ENCODE measurements at regions of chr18 and their contacts with region 1.

Region 1: DNA sequence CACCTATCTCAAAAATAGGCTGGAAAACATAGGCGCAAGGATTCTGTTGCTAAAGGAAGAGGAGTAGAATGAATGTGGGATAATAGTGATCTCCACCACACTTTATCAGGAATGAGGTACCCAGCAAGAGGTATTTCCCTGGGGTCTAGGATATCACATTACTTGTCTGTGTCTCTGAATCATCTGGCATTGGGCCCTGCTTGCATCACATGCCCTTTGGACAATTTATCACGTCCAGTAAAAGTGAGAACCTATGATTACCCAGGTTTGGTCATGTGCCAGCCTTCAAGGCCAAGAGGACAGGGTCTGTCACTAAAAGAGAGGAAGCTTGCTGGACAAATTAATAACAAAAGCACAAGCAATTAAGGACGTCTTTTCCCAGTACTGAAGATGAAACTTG is 11.4 kb upstream of the TRAPPC8 start:
- DNase-seq: no peak
- ATAC-seq: no peak
- H3K4me3 ChIP-seq: no peak overlapping the region
- H3K4me3 Mint-ChIP-seq: no peak overlapping the region
- H3K27ac ChIP-seq: no peak overlapping the region
- H3K27ac Mint-ChIP-seq: no peak overlapping the region
- H3K4me1 ChIP-seq: no peaks in the 10 kb centered on the region
- H3K4me1 Mint-ChIP-seq: peaks cover 2% of the 10 kb centered on the region
- H3K27me3 ChIP-seq: no peaks in the 10 kb centered on the region
- H3K27me3 Mint-ChIP-seq: peaks cover 8% of the 10 kb centered on the region
- CTCF ChIP-seq: no peak

Region 2: GRCh38 chr18:31555971-31556747 is 398.2 kb before region 1 on chr18:
- CTCF ChIA-PET with region 1: interaction called, 4 read pairs
- POLR2A ChIA-PET with region 1: no interaction called
- intact Hi-C with region 1: loop called (anchors 1 kb)
- DNase-seq: peak; percentile 66
- ATAC-seq: peak; percentile 39
- H3K4me3 ChIP-seq: no peak overlapping the region
- H3K4me3 Mint-ChIP-seq: no peak overlapping the region
- H3K27ac ChIP-seq: no peak overlapping the region
- H3K27ac Mint-ChIP-seq: no peak overlapping the region
- H3K4me1 ChIP-seq: no peaks in the 10 kb centered on the region
- H3K4me1 Mint-ChIP-seq: no peaks in the 10 kb centered on the region
- H3K27me3 ChIP-seq: peaks cover 0 to 2% (median 0%) of the 10 kb centered on the region in 4 experiments
- H3K27me3 Mint-ChIP-seq: peaks cover 8% of the 10 kb centered on the region
- CTCF ChIP-seq: peak; percentile 98

Region 3: DNA sequence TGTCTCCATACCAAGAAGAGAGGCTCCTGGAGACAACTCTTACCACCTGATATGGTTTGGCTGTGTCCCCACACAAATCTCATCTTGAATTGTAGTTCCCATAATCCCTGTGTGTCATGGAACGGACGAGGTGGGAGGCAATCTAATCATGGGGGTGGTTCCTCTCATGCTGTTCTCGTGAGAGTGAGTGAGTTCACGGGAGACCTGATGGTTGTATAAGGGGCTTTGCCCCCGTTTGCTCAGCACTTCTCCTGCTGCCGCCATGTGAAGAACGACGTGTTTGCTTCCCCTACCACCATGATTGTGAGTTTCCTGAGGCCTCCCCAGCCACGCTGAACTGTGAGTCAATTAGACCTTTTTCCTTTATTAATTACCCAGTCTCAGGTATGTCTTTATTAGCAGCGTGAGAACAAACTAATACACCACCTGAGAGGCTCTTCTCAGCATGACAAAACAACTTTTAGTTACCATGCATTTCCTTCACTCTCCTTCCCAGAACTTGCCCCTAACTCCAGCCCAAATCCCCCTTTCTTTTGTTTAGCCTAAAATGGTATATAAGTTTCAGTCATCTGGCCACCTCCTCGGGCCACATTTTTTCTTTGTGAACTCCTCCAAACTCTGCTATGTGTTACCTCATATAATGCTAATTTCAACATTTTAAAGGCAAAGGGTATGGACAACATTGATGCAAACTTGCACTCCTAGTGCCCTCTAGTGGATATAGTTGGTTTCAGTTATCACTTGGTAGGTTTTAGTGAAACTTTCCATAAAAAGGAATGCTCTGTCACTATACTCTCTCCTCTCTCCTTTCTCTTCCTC is 135.0 kb before region 1 on chr18:
- CTCF ChIA-PET with region 1: interaction called, 5 read pairs
- POLR2A ChIA-PET with region 1: no interaction called
- intact Hi-C with region 1: loop called (anchors 5 kb)
- DNase-seq: peak; percentile 42
- ATAC-seq: no peak
- H3K4me3 ChIP-seq: no peak overlapping the region
- H3K4me3 Mint-ChIP-seq: no peak overlapping the region
- H3K27ac ChIP-seq: no peak overlapping the region
- H3K27ac Mint-ChIP-seq: no peak overlapping the region
- H3K4me1 ChIP-seq: no peaks in the 10 kb centered on the region
- H3K4me1 Mint-ChIP-seq: no peaks in the 10 kb centered on the region
- H3K27me3 ChIP-seq: no peaks in the 10 kb centered on the region
- H3K27me3 Mint-ChIP-seq: peaks cover 6% of the 10 kb centered on the region
- CTCF ChIP-seq: peak; percentile 83

Region 4: GRCh38 chr18:31876707-31877106 is 77.6 kb before region 1 on chr18:
- CTCF ChIA-PET with region 1: no interaction called
- POLR2A ChIA-PET with region 1: no interaction called
- intact Hi-C with region 1: loop called (anchors 5 kb)
- DNase-seq: no peak
- ATAC-seq: no peak
- H3K4me3 ChIP-seq: no peak overlapping the region
- H3K4me3 Mint-ChIP-seq: no peak overlapping the region
- H3K27ac ChIP-seq: no peak overlapping the region
- H3K27ac Mint-ChIP-seq: no peak overlapping the region
- H3K4me1 ChIP-seq: no peaks in the 10 kb centered on the region
- H3K4me1 Mint-ChIP-seq: peaks cover 11% of the 10 kb centered on the region
- H3K27me3 ChIP-seq: no peaks in the 10 kb centered on the region
- H3K27me3 Mint-ChIP-seq: no peaks in the 10 kb centered on the region
- CTCF ChIP-seq: no peak

Region 5: DNA sequence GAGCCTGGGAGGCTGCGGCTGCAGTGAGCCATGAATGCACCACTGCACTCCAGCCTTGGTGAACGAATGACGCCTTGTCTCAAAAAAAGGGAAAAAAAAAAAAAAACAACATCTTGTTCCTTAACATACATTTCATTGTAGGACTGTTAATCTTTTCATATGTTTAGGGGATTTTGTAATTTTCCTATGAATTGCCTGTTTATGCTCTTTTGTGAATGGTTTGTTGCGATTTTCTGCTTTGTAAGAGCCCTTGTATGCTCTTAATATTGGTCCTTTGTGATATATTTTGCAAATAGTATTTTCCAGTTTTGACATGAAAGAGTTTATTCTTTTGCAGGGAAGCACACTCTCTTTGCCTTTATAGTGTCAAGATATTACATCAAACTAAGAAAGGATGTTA is 61.4 kb before region 1 on chr18:
- CTCF ChIA-PET with region 1: no interaction called
- POLR2A ChIA-PET with region 1: no interaction called
- intact Hi-C with region 1: loop called (anchors 10 kb)
- DNase-seq: no peak
- ATAC-seq: no peak
- H3K4me3 ChIP-seq: no peak overlapping the region
- H3K4me3 Mint-ChIP-seq: no peak overlapping the region
- H3K27ac ChIP-seq: no peak overlapping the region
- H3K27ac Mint-ChIP-seq: no peak overlapping the region
- H3K4me1 ChIP-seq: no peaks in the 10 kb centered on the region
- H3K4me1 Mint-ChIP-seq: no peaks in the 10 kb centered on the region
- H3K27me3 ChIP-seq: no peaks in the 10 kb centered on the region
- H3K27me3 Mint-ChIP-seq: no peaks in the 10 kb centered on the region
- CTCF ChIP-seq: no peak

Region 6: DNA sequence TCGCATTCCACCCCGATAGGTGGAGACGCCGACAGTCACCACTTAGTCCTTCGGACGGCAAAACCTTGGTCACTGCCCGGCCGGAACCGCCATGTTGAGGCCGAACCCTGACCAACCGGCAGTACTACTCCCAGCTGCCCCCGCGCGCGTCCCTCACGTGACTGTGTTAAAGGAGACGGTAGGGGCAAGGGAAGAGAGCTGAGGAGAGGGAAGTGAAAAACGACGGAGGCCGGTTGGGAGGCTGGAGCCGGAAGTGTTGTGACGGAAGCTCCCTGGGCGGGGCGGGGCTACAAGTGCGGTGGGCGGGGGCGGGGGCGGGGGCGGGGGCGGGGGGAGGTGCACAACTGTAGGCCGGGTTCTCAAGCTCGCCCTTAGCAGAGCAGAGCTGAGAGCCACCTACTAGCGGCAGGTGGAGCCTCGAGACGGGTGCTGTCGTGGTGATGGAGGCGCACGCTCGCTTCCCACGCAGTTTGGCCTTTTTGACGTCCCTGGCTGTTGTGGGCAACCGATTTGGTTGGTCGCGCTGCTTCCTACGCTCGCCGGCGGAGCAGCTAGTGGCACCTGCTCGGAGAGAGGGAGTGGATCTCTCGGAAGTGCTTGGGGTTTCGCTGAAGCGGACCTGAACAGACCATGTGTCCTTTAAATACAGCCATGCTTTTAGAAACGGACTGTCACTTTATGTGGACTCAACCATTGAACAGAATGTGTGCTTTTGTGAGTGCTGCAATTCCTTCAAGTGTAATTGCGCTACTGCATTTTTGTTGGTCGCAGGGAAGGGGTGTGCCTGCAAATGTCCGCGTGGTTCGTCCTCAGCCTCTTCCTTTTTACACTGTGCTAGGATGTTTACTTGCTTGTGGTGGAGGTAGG is 11.1 kb before region 1 on chr18 and contains the start of gene TRAPPC8:
- CTCF ChIA-PET with region 1: interaction called, 24 read pairs
- POLR2A ChIA-PET with region 1: no interaction called
- intact Hi-C with region 1: loop called (anchors 1 kb)
- DNase-seq: peak; percentile 98
- ATAC-seq: peak; percentile 80
- H3K4me3 ChIP-seq: peak within 1 kb of the TSS; percentile 83 to 97 (median 94)
- H3K4me3 Mint-ChIP-seq: peak within 1 kb of the TSS; percentile 100
- H3K27ac ChIP-seq: peak within 1 kb of the TSS; percentile 98
- H3K27ac Mint-ChIP-seq: peak within 1 kb of the TSS; percentile 100
- H3K4me1 ChIP-seq: peaks cover 24 to 31% of the 10 kb centered on the region in 2 donors
- H3K4me1 Mint-ChIP-seq: peaks cover 39% of the 10 kb centered on the region
- H3K27me3 ChIP-seq: no peaks in the 10 kb centered on the region
- H3K27me3 Mint-ChIP-seq: no peaks in the 10 kb centered on the region
- CTCF ChIP-seq: no peak
- total RNA-seq, gene TRAPPC8: 89.8 and 95.5 TPM in 2 replicates

Region 7: DNA sequence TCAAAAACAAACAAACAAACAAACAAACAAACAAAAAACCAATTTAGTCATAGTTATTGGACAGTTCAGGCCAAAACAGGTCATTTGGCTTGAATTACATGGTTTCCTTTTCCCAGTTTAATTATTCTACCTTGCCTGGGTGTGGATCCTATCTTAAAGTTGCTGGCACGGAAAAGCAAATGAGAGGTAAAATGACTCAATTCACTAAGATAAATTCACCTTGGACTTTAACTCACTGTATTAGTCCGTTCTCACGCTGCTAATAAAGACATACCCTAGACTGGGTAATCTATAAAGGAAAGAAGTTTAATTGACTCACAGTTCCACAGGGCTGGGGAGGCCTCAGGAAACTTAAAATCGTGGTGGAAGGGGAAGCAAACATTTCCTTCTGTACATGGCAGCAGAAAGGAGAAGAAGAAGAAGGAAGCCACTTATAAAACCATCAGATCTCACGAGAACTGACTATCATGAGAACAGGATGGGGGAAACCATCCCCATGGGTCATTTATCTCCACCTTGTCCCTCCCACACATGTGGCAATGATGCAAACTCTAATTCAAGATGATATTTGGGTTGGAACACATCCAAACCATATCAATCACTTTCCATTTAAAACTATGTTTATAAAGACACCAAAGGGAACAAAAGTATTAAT is 11.1 kb after region 1 on chr18:
- CTCF ChIA-PET with region 1: no interaction called
- POLR2A ChIA-PET with region 1: no interaction called
- intact Hi-C with region 1: no loop called
- DNase-seq: no peak
- ATAC-seq: no peak
- H3K4me3 ChIP-seq: no peak overlapping the region
- H3K4me3 Mint-ChIP-seq: no peak overlapping the region
- H3K27ac ChIP-seq: no peak overlapping the region
- H3K27ac Mint-ChIP-seq: no peak overlapping the region
- H3K4me1 ChIP-seq: no peaks in the 10 kb centered on the region
- H3K4me1 Mint-ChIP-seq: no peaks in the 10 kb centered on the region
- H3K27me3 ChIP-seq: no peaks in the 10 kb centered on the region
- H3K27me3 Mint-ChIP-seq: no peaks in the 10 kb centered on the region
- CTCF ChIP-seq: no peak

Region 8: GRCh38 chr18:31990823-31991222 is 36.5 kb after region 1 on chr18:
- CTCF ChIA-PET with region 1: no interaction called
- POLR2A ChIA-PET with region 1: no interaction called
- intact Hi-C with region 1: no loop called
- DNase-seq: peak; percentile 16
- ATAC-seq: peak; percentile 63
- H3K4me3 ChIP-seq: no peak overlapping the region
- H3K4me3 Mint-ChIP-seq: peak overlapping the region; percentile 45
- H3K27ac ChIP-seq: peak overlapping the region in 1 of 2 donors; percentile 61
- H3K27ac Mint-ChIP-seq: peak overlapping the region; percentile 10
- H3K4me1 ChIP-seq: peaks cover 10 to 15% of the 10 kb centered on the region in 2 donors
- H3K4me1 Mint-ChIP-seq: peaks cover 16% of the 10 kb centered on the region
- H3K27me3 ChIP-seq: no peaks in the 10 kb centered on the region
- H3K27me3 Mint-ChIP-seq: no peaks in the 10 kb centered on the region
- CTCF ChIP-seq: no peak

Region 9: GRCh38 chr18:32040936-32041335 is 86.6 kb after region 1 on chr18:
- CTCF ChIA-PET with region 1: no interaction called
- POLR2A ChIA-PET with region 1: no interaction called
- intact Hi-C with region 1: no loop called
- DNase-seq: peak; percentile 38
- ATAC-seq: peak; percentile 39
- H3K4me3 ChIP-seq: no peak overlapping the region
- H3K4me3 Mint-ChIP-seq: peak overlapping the region; percentile 6
- H3K27ac ChIP-seq: peak overlapping the region; percentile 24 to 74
- H3K27ac Mint-ChIP-seq: peak overlapping the region; percentile 28
- H3K4me1 ChIP-seq: peaks cover 24 to 30% of the 10 kb centered on the region in 2 donors
- H3K4me1 Mint-ChIP-seq: peaks cover 33% of the 10 kb centered on the region
- H3K27me3 ChIP-seq: no peaks in the 10 kb centered on the region
- H3K27me3 Mint-ChIP-seq: no peaks in the 10 kb centered on the region
- CTCF ChIP-seq: no peak

Region 10: DNA sequence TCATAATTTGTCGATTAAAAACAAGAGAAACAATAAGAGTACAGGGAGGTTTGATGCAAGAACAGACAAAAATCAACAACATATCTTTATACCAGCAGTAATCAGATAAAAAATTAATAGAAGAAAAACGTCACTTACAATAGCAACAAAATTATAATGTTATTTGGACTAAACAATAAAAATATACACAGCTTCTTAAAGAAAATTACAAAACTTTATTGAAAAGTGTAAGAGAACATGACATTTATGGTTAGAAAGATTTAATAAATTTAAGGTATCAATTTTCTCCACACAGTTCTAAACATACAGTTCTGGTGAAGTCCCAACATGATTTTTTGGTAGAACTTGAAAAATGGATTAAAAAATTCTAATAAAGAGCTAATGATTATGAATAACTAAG is 150.2 kb after region 1 on chr18:
- CTCF ChIA-PET with region 1: no interaction called
- POLR2A ChIA-PET with region 1: no interaction called
- intact Hi-C with region 1: no loop called
- DNase-seq: no peak
- ATAC-seq: no peak
- H3K4me3 ChIP-seq: no peak overlapping the region
- H3K4me3 Mint-ChIP-seq: no peak overlapping the region
- H3K27ac ChIP-seq: no peak overlapping the region
- H3K27ac Mint-ChIP-seq: no peak overlapping the region
- H3K4me1 ChIP-seq: peaks cover 0 to 3% of the 10 kb centered on the region in 2 donors
- H3K4me1 Mint-ChIP-seq: peaks cover 32% of the 10 kb centered on the region
- H3K27me3 ChIP-seq: no peaks in the 10 kb centered on the region
- H3K27me3 Mint-ChIP-seq: no peaks in the 10 kb centered on the region
- CTCF ChIP-seq: no peak

Measured in B cell (primary cell).